AG04449 (cell line): ENCODE measurements at regions of chr6 and their contacts with region 1.

Region 1: DNA sequence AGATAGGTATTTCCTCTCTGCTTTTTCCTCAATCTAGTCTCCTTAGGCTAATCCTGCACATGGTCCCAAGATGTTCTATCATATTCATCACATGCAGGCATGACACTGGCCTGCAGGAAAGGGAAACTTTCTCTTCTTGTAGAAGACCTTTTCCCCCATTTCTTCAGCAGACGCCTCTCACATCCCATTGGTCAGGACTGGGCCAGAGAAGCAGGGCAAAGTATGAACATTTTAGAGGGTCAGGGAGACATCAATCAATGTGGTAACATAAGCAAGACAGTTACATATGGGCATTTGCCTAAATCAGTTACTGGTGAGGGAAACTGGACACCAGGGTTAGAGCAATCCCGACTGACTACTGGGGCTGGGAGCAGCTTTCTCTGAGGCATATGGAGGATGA is 90.1 kb downstream of the CRYBG1 start:
- DNase-seq: no peak
- H3K4me3 ChIP-seq: no peak overlapping the region
- CTCF ChIP-seq: no peak

Region 2: DNA sequence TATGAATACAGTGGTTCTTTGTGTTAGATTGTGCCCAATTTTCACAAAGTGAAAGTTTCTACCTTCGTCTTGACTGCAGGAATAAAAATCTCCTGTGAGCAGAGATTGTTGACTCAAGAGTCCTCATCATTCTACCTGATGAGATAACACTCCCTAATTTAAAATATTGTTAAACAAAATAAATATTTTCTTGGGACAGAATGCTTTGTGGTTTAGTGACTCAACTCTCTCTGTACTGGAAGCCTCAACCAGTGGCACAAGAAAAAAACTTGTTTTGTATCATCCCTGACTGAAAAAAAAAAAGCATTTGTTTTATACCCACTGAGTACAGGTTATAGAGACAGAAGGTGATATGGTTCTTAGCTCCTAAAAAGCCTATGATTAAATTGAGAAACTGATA is 11.2 kb before region 1 on chr6:
- CTCF ChIA-PET with region 1: interaction called, 10 read pairs
- POLR2A ChIA-PET with region 1: no interaction called
- DNase-seq: no peak
- H3K4me3 ChIP-seq: no peak overlapping the region
- CTCF ChIP-seq: no peak

Region 3: DNA sequence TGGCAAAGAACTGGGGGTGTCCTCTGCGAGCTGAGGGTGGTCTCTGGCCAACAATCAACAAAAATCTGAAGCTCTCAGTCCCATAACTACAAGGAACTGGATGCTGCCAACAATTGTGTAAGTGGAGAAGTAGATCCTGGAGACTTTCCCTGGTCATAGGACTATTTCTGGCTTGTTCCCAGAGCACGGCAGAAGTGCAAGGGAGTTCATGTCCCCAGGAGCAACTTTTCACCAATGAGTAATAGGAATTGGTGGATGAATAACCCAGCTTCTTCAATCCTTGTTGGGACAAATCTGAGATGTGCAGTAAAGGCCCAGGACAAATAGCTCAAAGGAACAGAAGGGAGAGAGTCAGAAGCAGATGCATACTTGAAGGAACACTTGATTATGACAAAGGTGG is 274.2 kb after region 1 on chr6:
- CTCF ChIA-PET with region 1: no interaction called
- POLR2A ChIA-PET with region 1: no interaction called
- DNase-seq: no peak
- H3K4me3 ChIP-seq: no peak overlapping the region
- CTCF ChIP-seq: no peak